MCF 10A (cell line): ENCODE measurements at regions of chr5 and their contacts with region 1.

Region 1: GRCh38 chr5:91101600-91102379 is 281.3 kb downstream of the ARRDC3 start:
- DNase-seq: peak; percentile 83
- H3K4me3 Mint-ChIP-seq: no peak overlapping the region
- H3K27ac Mint-ChIP-seq: no peak overlapping the region
- H3K4me1 Mint-ChIP-seq: peaks cover 25% of the 10 kb centered on the region
- H3K27me3 Mint-ChIP-seq: no peaks in the 10 kb centered on the region
- CTCF ChIP-seq: peak; percentile 87

Region 2: DNA sequence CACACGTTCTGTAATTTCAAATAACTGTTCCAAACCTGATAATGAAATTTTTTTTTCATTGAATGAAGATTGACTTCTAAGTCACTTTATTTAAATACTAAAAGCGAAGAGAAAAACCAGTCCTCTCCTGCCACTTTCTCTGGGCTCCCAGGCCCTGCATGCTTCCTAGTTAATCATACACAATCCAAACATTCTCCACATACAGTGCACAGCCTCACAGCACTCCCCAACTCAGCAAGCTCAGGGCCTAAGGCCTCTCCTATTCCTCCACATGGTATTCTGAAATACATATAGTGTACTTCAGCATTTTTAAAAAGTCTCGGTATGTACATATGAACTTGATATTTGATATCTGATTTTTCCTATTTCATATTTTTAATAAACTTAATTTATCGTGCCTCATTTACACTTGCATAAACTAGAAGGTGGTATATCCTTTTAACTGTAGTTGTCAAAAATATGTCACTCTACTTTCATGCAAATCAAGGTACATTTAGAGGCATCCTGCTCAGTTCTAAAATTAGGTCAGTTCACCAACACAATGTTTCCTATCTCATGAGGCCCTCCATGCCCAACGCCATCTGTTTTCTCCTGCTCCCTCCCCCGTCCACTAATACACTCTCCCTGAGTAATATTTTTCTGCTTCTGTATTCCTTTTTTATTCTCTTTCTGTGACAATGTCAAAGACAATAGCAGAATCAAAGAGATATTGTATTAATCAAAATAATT is 74.7 kb after region 1 on chr5:
- CTCF ChIA-PET with region 1: no interaction called
- POLR2A ChIA-PET with region 1: no interaction called
- intact Hi-C with region 1: no loop called
- DNase-seq: no peak
- H3K4me3 Mint-ChIP-seq: no peak overlapping the region
- H3K27ac Mint-ChIP-seq: no peak overlapping the region
- H3K4me1 Mint-ChIP-seq: peaks cover 6% of the 10 kb centered on the region
- H3K27me3 Mint-ChIP-seq: no peaks in the 10 kb centered on the region
- CTCF ChIP-seq: no peak

Region 3: GRCh38 chr5:91219803-91220371 is 118.1 kb after region 1 on chr5:
- CTCF ChIA-PET with region 1: interaction called, 20 read pairs
- POLR2A ChIA-PET with region 1: interaction called, 6 read pairs
- intact Hi-C with region 1: no loop called
- DNase-seq: peak; percentile 22
- H3K4me3 Mint-ChIP-seq: no peak overlapping the region
- H3K27ac Mint-ChIP-seq: no peak overlapping the region
- H3K4me1 Mint-ChIP-seq: peaks cover 18% of the 10 kb centered on the region
- H3K27me3 Mint-ChIP-seq: no peaks in the 10 kb centered on the region
- CTCF ChIP-seq: no peak